MCF 10A (cell line): ENCODE measurements at regions of chr11 and their contacts with region 1.

Region 1: DNA sequence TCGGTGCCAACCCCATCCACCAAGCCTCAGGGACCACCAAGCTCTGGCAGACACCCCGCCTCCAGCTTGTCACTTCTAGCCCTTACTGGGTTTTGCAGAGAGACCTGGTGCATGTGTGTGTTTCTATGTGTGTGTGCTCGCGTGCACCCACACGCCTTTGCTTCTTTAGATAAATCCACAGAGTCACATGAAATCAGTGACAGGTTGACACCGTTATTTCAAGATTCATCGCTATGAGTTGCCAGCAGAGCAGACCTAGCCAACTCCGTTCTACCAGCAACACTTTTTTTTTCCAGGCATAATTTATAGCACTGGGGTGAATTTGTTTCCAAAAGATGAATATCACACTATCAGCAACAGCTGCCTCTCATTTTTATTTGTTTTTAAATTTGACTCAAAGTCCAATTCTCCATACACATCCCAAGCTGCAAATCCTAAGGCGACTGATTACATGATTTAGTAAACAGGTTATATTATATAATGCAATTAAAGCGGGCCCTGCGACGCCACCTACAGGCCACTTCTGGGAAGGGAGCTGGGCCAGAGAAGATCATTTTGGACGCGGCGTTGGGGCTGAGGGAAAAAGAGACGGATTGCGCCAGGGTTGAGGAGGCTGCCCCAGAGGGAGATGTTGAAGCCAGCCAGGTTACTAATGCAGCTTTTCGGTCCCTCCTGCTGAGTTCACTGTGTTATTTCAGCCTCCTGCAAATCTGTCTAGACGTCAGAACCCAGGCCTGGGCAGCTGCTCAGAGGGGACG is 150.5 kb downstream of the FEZ1 start:
- DNase-seq: peak; percentile 76
- H3K4me3 Mint-ChIP-seq: no peak overlapping the region
- H3K27ac Mint-ChIP-seq: no peak overlapping the region
- H3K4me1 Mint-ChIP-seq: peaks cover 6% of the 10 kb centered on the region
- H3K27me3 Mint-ChIP-seq: peaks cover 16% of the 10 kb centered on the region
- CTCF ChIP-seq: peak; percentile 81

Region 2: DNA sequence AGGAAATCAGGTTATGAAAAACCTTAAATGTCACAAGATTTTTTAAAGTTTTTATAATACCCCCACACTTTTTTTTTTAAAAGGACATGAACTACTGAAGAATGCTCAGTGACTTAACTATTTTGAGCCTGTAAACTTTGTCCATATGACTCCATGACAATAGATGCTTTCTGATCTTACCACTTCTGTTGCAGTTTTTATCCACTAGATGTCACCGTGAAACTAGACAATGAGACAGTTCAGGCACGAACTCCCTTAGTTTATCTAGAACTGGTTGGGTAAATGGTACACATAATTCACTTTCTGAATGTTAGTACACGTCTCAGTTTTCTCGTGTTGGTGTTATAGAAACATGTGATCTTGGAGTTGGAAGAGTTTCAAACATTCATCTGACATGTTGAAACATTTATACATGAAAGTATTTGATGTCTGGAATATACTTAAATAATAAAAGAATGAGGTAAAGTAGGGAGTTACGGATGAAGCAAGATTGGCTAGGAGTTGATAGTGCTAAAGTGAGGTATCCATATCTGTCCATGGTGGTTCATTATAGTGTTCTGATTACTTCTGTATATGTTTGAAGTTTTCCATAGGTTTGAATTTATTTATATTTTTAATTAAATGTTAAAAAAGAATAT is 383.5 kb before region 1 on chr11:
- CTCF ChIA-PET with region 1: interaction called, 23 read pairs
- POLR2A ChIA-PET with region 1: no interaction called
- intact Hi-C with region 1: loop called (anchors 1 kb)
- DNase-seq: peak; percentile 85
- H3K4me3 Mint-ChIP-seq: no peak overlapping the region
- H3K27ac Mint-ChIP-seq: no peak overlapping the region
- H3K4me1 Mint-ChIP-seq: no peaks in the 10 kb centered on the region
- H3K27me3 Mint-ChIP-seq: no peaks in the 10 kb centered on the region
- CTCF ChIP-seq: peak; percentile 69

Region 3: DNA sequence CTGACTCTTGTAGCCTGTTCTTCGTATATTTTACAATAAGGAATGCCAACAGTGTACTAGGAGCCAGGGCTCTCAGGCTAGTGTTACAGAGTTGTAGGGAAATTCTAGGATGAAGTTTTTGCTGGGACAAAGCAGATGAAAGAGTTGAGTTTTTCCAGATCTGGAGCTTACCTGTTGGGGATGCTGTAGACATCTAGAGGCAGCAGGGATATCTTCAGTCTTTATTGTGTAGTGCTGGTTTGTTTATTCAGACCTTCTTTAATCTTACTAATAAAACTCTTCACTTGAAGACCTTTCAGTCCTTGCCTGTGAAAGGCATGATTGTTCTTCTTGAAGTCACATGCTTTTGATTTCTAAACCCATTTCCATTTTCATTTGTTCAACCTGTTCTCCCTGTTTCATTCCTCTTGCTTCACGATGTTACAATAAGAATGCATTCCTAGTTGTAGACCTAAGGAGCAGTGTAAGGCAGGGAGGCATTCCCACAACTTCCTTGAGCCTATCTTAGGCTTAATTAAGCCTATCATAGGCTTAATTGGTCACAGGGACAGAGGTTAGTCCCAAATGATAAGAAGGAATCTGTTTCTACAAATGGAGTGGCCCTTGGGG is 290.4 kb before region 1 on chr11:
- CTCF ChIA-PET with region 1: no interaction called
- POLR2A ChIA-PET with region 1: no interaction called
- intact Hi-C with region 1: no loop called
- DNase-seq: no peak
- H3K4me3 Mint-ChIP-seq: no peak overlapping the region
- H3K27ac Mint-ChIP-seq: no peak overlapping the region
- H3K4me1 Mint-ChIP-seq: no peaks in the 10 kb centered on the region
- H3K27me3 Mint-ChIP-seq: no peaks in the 10 kb centered on the region
- CTCF ChIP-seq: no peak

Region 4: DNA sequence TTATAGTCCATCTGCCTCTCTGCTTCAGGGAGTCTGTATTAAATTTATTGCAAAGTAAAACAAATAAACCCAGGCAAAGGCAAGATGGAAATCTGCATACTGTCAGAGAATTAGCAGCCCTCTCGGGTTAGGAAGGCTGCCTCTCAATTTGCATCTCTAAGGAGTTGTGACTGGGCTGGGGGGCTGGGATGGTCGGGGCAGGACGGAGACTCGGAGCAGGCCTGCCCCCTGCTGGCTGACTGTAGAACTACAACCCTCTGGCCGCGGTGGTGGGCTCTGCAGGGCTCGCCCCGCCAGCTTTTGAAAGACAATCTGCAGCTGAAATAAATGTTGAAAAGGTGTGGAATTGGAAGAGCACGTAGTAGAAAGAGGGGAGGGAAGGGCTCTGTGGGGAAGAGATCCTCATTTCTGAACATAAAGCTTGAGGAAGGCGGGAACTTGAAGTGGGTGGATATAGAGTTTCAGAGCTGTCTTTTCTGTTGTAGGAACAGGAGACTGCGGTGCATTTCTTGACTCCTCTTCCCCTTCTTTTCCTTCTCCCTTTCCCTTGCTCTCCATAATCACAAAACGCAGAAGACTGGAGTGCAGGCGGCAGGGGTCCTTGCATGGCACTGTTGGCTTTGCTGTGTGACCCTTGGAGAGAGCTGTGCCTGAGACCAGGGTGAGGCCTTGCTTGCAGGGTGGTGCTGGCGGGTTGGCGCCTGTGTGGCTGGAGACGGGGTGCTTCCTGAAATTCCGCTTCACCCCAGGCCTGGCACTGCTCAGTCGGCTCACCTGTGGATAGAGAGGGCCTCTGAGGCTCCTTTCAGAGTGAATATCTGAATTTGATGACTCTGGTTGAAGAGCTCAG is 203.7 kb before region 1 on chr11:
- CTCF ChIA-PET with region 1: interaction called, 25 read pairs
- POLR2A ChIA-PET with region 1: no interaction called
- intact Hi-C with region 1: no loop called
- DNase-seq: peak; percentile 40
- H3K4me3 Mint-ChIP-seq: no peak overlapping the region
- H3K27ac Mint-ChIP-seq: no peak overlapping the region
- H3K4me1 Mint-ChIP-seq: peaks cover 6% of the 10 kb centered on the region
- H3K27me3 Mint-ChIP-seq: no peaks in the 10 kb centered on the region
- CTCF ChIP-seq: peak; percentile 98

Region 5: GRCh38 chr11:125174686-125175085 is 170.9 kb before region 1 on chr11:
- CTCF ChIA-PET with region 1: interaction called, 192 read pairs
- POLR2A ChIA-PET with region 1: no interaction called
- intact Hi-C with region 1: no loop called
- DNase-seq: no peak
- H3K4me3 Mint-ChIP-seq: no peak overlapping the region
- H3K27ac Mint-ChIP-seq: no peak overlapping the region
- H3K4me1 Mint-ChIP-seq: no peaks in the 10 kb centered on the region
- H3K27me3 Mint-ChIP-seq: peaks cover 65% of the 10 kb centered on the region
- CTCF ChIP-seq: no peak

Region 6: GRCh38 chr11:125329786-125330185 is 15.8 kb before region 1 on chr11:
- CTCF ChIA-PET with region 1: interaction called, 26 read pairs
- POLR2A ChIA-PET with region 1: interaction called, 3 read pairs
- intact Hi-C with region 1: no loop called
- DNase-seq: no peak
- H3K4me3 Mint-ChIP-seq: no peak overlapping the region
- H3K27ac Mint-ChIP-seq: no peak overlapping the region
- H3K4me1 Mint-ChIP-seq: no peaks in the 10 kb centered on the region
- H3K27me3 Mint-ChIP-seq: peaks cover 46% of the 10 kb centered on the region
- CTCF ChIP-seq: no peak

Region 7: GRCh38 chr11:125358254-125358840 is 12.7 kb after region 1 on chr11:
- CTCF ChIA-PET with region 1: interaction called, 42 read pairs
- POLR2A ChIA-PET with region 1: no interaction called
- intact Hi-C with region 1: no loop called
- DNase-seq: no peak
- H3K4me3 Mint-ChIP-seq: no peak overlapping the region
- H3K27ac Mint-ChIP-seq: no peak overlapping the region
- H3K4me1 Mint-ChIP-seq: no peaks in the 10 kb centered on the region
- H3K27me3 Mint-ChIP-seq: no peaks in the 10 kb centered on the region
- CTCF ChIP-seq: no peak

Region 8: GRCh38 chr11:125370561-125371389 is 25.2 kb after region 1 on chr11:
- CTCF ChIA-PET with region 1: interaction called, 13 read pairs
- POLR2A ChIA-PET with region 1: interaction called, 3 read pairs
- intact Hi-C with region 1: no loop called
- DNase-seq: no peak
- H3K4me3 Mint-ChIP-seq: no peak overlapping the region
- H3K27ac Mint-ChIP-seq: no peak overlapping the region
- H3K4me1 Mint-ChIP-seq: peaks cover 3% of the 10 kb centered on the region
- H3K27me3 Mint-ChIP-seq: peaks cover 39% of the 10 kb centered on the region
- CTCF ChIP-seq: no peak

Region 9: GRCh38 chr11:125494974-125495725 is 149.6 kb after region 1 on chr11:
- CTCF ChIA-PET with region 1: no interaction called
- POLR2A ChIA-PET with region 1: no interaction called
- intact Hi-C with region 1: no loop called
- DNase-seq: no peak
- H3K4me3 Mint-ChIP-seq: peak overlapping the region; percentile 71
- H3K27ac Mint-ChIP-seq: peak overlapping the region; percentile 82
- H3K4me1 Mint-ChIP-seq: peaks cover 5% of the 10 kb centered on the region
- H3K27me3 Mint-ChIP-seq: peaks cover 11% of the 10 kb centered on the region
- CTCF ChIP-seq: no peak